ENCODE measurements at regions of chr1 and their contacts with region 1.

Region 1: DNA sequence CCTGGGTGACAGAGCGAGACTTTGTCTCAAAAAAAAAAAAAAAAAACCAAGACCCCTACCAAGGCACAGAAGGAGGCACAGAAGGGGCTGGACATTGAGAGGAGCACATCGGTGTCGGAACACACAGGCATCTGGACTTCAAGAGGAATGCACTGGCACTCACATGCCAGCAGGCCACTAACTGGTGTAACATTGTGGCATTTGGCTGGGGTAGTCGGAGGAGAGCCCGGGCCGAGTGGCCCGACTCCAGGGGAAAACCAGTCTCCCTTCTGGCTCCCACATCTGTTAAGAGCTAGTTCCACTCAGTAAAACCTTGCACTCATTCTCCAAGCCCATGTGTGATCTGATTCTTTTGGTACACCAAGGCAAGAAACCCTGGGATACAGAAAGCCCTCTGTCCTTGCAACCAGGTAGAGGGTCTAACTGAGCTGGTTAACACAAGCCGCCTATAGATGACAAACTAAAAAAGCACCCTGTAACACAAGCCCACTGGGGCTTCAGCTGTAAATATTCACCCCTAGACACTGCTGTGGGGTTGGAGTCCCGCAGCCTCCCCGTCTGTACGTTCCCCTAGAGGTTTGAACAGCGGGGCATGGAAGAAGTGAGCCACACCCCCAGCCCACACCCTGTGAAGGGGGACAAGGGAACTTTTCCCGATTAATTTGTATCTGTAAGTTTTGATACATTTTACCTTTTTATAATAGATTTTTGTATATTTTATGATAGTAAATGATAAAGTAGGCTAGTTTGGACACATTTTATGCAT is 17.2 kb upstream of the AKIRIN1 start:
- DNase-seq: no peak
- H3K4me3 ChIP-seq: no peak overlapping the region
- H3K27ac ChIP-seq: no peak overlapping the region
- H3K4me1 ChIP-seq: peaks cover 11% of the 10 kb centered on the region
- H3K27me3 ChIP-seq: no peaks in the 10 kb centered on the region
- CTCF ChIP-seq: no peak

Region 2: GRCh38 chr1:39001516-39002421 is 27.9 kb after region 1 on chr1:
- CTCF ChIA-PET with region 1: no interaction called
- POLR2A ChIA-PET with region 1: interaction called, 11 read pairs
- intact Hi-C with region 1: no loop called
- DNase-seq: no peak
- H3K4me3 ChIP-seq: no peak overlapping the region
- H3K27ac ChIP-seq: no peak overlapping the region
- H3K4me1 ChIP-seq: no peaks in the 10 kb centered on the region
- H3K27me3 ChIP-seq: no peaks in the 10 kb centered on the region
- CTCF ChIP-seq: no peak

Region 3: DNA sequence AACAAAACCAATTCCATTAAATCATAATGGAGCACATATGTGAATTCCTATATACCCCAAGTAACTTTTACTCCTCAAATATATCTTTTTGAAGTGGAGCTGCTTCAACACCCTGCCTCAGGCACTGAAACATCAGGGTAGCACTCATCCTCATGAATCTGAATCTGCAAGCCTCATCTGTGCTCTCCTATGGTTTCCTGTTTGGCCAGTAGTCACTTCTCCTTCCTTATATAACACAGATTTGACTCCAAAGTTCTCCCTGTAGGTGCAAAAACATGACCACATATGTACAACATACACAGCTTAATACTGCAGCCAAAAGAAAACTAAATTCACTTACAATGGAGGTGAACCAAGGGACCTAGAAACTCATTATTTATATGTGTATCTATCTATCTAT is 902.3 kb after region 1 on chr1:
- CTCF ChIA-PET with region 1: no interaction called
- POLR2A ChIA-PET with region 1: no interaction called
- intact Hi-C with region 1: no loop called
- DNase-seq: no peak
- H3K4me3 ChIP-seq: no peak overlapping the region
- H3K27ac ChIP-seq: no peak overlapping the region
- H3K4me1 ChIP-seq: no peaks in the 10 kb centered on the region
- H3K27me3 ChIP-seq: no peaks in the 10 kb centered on the region
- CTCF ChIP-seq: no peak